ENCODE measurements at regions of chr6 and their contacts with region 1.

Region 1: DNA sequence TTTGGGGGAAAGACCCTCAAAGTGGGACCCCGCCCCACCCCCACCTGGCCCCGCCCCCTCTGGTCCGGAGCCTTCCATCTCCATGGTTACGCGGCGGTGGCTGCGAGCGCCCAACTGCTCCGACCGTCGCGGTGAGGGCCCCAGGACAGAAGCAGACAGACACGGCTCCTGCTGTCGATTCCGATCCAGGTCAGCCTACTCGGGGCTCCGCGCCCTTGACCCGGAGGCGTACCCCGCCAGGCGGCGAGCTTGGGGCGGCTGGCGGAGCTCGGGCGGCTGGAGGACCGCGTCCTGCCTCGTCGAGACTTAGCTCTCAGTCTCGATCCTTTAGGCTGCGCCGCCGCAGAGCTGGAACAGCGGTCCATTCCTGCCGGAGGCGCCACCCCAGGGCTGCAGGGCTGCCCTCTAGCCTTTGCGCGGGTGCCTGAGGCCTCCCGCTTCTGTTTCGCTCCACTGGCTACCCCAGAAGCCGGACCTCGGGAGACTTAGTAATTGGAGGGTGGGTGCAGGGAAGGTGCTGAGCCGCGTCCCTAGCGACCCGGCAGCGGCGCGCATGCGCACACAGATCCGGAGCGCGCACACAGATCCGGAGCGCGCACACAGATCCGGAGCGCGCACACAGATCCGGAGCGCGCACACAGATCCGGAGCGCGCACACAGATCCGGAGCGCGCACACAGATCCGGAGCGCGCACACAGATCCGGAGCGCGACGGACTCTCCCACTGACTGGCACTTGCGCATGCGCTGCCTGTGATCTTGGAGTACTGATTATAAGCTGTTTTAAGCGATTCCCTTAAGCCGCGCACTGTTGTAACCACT is at the start of gene CFAP206:
- DNase-seq: peak; percentile 84 to 94
- H3K4me3 ChIP-seq: peak within 1 kb of the TSS; percentile 89 to 100 (median 94)
- H3K27ac ChIP-seq: peak within 1 kb of the TSS; percentile 76 to 89 (median 83)
- H3K4me1 ChIP-seq: peaks cover 0 to 14% (median 10%) of the 10 kb centered on the region in 4 donors
- H3K27me3 ChIP-seq: no peaks in the 10 kb centered on the region
- CTCF ChIP-seq: peak in 1 of 7 experiments; percentile 6
- EP300 ChIP-seq: no peak
- POLR2A ChIP-seq: no peak
- total RNA-seq, gene CFAP206: 0.18 TPM in 1 of 5 donors, not detected in the others

Region 2: GRCh38 chr6:87444362-87444761 is 36.3 kb after region 1 on chr6:
- intact Hi-C with region 1: no loop called
- DNase-seq: no peak
- H3K4me3 ChIP-seq: no peak overlapping the region
- H3K27ac ChIP-seq: no peak overlapping the region
- H3K4me1 ChIP-seq: no peaks in the 10 kb centered on the region
- H3K27me3 ChIP-seq: no peaks in the 10 kb centered on the region
- CTCF ChIP-seq: no peak
- EP300 ChIP-seq: no peak
- POLR2A ChIP-seq: no peak

Region 3: DNA sequence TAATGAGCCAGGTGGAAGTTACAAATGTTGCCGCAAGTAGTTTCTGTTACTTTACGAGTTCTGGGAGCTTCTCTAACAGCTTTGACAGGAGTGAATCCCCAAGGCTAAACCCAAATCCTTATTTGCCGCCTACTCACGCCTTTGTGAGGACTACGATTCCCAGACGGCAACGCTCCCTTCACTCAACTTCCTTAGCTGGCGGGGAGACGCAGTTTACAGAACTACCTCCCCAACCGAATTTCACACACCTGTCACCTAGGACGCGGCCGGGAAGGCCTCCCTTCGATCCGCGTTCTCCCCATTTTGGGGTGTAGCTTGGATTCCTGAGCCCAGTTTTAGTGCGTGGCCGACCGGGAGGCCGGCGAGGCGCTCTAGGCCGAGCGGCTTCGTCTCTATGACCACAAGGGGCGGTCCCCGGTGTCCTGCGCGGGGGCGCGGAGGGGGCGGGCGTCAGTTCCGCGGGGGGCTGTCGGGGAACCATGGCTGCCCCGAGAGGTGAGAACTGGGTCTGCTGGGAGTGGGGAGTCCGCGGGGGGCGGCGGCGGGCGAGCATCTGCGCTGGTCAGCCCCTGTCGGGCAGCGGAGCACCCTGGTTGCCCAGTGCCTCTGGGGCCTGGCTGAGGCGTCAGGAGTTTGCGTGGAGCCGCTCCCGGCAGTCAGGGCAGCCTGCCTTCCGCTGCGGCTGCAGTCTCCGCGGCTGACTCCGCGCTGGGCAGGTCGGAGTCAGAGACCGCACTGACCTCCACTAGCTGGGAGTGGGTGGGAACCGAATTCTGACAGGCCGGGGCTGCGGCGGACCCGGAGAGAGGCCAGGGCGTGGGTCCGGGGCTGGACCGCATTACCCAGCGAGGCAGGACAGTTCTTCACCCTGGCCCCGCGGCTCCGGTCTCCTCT is 64.7 kb after region 1 on chr6 and contains the start of gene SLC35A1:
- intact Hi-C with region 1: loop called (anchors 10 kb)
- DNase-seq: peak; percentile 86 to 95
- H3K4me3 ChIP-seq: peak within 1 kb of the TSS; percentile 79 to 92 (median 86)
- H3K27ac ChIP-seq: peak within 1 kb of the TSS; percentile 91 to 97 (median 95)
- H3K4me1 ChIP-seq: peaks cover 8 to 37% (median 20%) of the 10 kb centered on the region in 4 donors
- H3K27me3 ChIP-seq: no peaks in the 10 kb centered on the region
- CTCF ChIP-seq: peak in 3 of 7 experiments; percentile 16 to 49 (median 22)
- EP300 ChIP-seq: no peak
- POLR2A ChIP-seq: peak in 2 of 4 donors; percentile 6 to 40
- total RNA-seq, gene SLC35A1: 2.2 to 117 (median 17.0) TPM